ENCODE measurements at regions of chr15 and their contacts with region 1.

Region 1: GRCh38 chr15:57732526-57733331 is 26.2 kb downstream of the POLR2M start:
- DNase-seq: peak; percentile 69
- H3K4me3 Mint-ChIP-seq: no peak overlapping the region
- H3K27ac Mint-ChIP-seq: no peak overlapping the region
- H3K4me1 Mint-ChIP-seq: peaks cover 8% of the 10 kb centered on the region
- H3K27me3 Mint-ChIP-seq: no peaks in the 10 kb centered on the region

Region 2: DNA sequence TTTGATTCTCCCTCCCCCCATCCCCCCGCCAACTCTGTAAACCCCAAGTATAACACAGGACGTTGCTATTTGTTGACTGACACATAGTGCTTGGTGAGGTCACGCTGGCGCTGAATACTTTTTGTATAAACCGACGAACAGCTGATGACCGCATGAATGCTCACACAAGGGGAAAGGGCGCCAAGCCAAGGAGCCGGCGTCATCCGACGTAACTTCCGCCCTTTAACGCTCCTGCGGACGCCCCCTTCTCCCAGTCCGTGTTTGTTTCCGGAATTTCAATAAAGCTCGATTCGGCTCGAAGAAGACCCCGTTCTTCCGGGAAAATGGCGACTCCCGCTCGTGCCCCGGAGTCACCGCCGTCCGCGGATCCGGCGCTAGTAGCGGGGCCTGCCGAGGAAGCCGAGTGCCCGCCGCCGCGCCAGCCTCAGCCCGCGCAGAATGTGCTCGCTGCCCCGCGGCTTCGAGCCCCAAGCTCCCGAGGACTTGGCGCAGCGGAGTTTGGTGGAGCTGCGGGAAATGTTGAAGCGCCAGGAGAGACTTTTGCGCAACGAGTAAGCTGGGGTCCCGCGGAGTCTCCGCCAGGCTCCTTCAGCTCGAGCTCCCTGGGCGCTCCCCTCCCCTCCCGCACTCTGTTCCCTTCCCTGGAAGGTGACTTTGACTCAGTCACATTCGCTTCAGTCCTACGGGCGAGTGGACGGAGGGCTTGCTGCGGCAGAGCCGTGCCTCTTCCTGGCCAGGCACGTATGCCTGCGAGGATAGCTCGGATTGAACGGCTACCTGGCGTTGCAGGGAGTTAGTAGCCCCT is 26.1 kb before region 1 on chr15 and contains the start of gene POLR2M:
- CTCF ChIA-PET with region 1: interaction called, 21 read pairs
- intact Hi-C with region 1: no loop called
- DNase-seq: peak; percentile 98
- H3K4me3 Mint-ChIP-seq: peak within 1 kb of the TSS; percentile 90
- H3K27ac Mint-ChIP-seq: peak within 1 kb of the TSS; percentile 93
- H3K4me1 Mint-ChIP-seq: peaks cover 79% of the 10 kb centered on the region
- H3K27me3 Mint-ChIP-seq: no peaks in the 10 kb centered on the region
- total RNA-seq, gene POLR2M: 107 to 114 TPM

Region 3: DNA sequence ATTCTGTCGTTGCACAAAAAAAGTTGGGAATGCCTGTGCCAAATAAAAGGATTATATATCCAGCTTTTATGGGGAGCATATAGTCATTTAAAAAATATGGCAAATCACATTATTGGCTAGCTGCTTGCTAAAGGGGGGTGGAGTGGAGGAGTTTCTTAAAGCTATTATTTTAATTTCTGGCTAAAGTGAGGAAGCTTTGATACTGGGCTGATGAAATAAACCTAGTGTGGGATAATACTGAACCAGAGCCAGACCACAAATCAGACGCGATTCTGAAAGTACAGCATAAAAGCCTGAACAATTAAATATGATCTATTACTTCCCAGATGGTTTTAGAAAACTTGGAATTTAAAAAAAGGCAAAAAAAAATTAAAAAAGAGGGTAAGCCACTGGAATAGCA is 11.9 kb before region 1 on chr15:
- CTCF ChIA-PET with region 1: interaction called, 13 read pairs
- intact Hi-C with region 1: no loop called
- DNase-seq: no peak
- H3K4me3 Mint-ChIP-seq: no peak overlapping the region
- H3K27ac Mint-ChIP-seq: no peak overlapping the region
- H3K4me1 Mint-ChIP-seq: no peaks in the 10 kb centered on the region
- H3K27me3 Mint-ChIP-seq: no peaks in the 10 kb centered on the region

Region 4: DNA sequence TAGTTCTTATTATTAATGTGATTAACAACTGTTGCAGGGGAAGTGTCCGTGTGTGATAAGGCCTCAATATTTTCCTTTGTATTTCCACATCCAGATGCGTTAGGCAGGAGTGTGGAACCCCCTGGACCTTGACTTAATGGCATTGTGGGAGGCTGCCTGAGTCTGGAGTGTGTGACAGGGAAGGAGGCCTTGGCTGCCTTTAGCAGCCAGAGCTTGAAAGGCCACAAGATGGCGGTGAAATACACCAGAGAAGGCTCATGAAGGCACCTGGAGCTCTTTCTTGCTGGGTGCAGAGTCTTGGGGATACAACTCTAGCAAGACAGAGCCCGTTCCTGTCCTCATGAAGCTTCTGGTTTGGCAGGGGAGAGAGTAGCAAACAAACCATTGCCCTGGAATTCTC is 10.7 kb after region 1 on chr15:
- CTCF ChIA-PET with region 1: interaction called, 14 read pairs
- intact Hi-C with region 1: no loop called
- DNase-seq: peak; percentile 11
- H3K4me3 Mint-ChIP-seq: no peak overlapping the region
- H3K27ac Mint-ChIP-seq: no peak overlapping the region
- H3K4me1 Mint-ChIP-seq: peaks cover 5% of the 10 kb centered on the region
- H3K27me3 Mint-ChIP-seq: no peaks in the 10 kb centered on the region

Measured in activated naive CD4-positive, alpha-beta T cell treated with anti-CD3 and anti-CD28 coated beads for 36 hours (primary cell).